CD8-positive, alpha-beta T cell (primary cell): ENCODE measurements at regions of chr2 and their contacts with region 1.

Region 1: DNA sequence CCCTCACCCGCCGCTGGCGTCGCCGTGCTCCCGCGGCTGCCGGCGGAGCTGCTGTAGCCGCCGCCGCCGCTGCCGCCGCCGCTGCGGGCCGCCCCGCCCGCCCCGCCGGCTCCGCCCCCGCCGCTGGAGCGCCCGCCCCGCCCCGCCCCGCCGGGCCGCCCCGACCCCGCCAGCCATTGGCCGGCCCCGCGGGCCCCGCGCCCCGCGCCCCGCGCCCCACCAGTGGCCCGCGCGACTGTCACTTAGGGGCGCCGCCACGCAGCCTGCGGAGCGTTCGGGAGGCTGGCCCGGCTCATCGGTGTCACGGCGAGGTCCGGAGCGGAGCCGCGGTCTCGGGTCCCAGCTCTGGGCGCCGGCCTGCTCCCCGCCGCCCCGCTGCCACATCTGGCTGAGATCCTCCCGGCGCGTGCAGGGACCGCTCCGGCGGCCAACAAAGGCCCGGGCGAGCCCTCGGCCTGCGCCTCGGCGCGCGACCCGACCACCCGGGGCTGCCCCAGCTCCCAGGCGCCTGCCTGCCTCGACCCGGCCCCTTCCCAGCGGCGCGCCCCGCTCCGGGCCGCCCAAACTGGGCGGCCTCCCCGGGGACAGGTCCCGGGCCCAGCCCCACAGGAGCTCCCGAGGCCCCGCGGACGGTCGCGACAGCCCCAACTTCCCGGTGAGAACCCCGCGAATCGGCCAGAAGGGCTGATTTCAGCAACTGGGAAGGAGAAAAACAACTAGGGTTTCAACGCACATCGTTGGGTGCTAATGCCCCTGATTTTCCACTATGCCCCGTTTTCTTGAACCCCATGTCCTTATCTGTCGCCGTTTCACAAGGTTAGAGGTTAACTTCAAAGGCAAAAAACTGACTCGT is at the start of gene MGAT4A:
- DNase-seq: peak; percentile 62 to 90 (median 82)
- ATAC-seq: peak; percentile 76
- H3K4me3 ChIP-seq: peak within 1 kb of the TSS; percentile 80 to 93
- H3K4me3 Mint-ChIP-seq: peak within 1 kb of the TSS; percentile 93
- H3K27ac ChIP-seq: peak within 1 kb of the TSS; percentile 82 to 83
- H3K27ac Mint-ChIP-seq: peak within 1 kb of the TSS; percentile 97
- H3K4me1 ChIP-seq: peaks cover 49% of the 10 kb centered on the region
- H3K4me1 Mint-ChIP-seq: peaks cover 59% of the 10 kb centered on the region
- H3K27me3 ChIP-seq: no peaks in the 10 kb centered on the region
- H3K27me3 Mint-ChIP-seq: no peaks in the 10 kb centered on the region
- CTCF ChIP-seq: no peak
- total RNA-seq, gene MGAT4A: 226 to 229 TPM

Region 2: DNA sequence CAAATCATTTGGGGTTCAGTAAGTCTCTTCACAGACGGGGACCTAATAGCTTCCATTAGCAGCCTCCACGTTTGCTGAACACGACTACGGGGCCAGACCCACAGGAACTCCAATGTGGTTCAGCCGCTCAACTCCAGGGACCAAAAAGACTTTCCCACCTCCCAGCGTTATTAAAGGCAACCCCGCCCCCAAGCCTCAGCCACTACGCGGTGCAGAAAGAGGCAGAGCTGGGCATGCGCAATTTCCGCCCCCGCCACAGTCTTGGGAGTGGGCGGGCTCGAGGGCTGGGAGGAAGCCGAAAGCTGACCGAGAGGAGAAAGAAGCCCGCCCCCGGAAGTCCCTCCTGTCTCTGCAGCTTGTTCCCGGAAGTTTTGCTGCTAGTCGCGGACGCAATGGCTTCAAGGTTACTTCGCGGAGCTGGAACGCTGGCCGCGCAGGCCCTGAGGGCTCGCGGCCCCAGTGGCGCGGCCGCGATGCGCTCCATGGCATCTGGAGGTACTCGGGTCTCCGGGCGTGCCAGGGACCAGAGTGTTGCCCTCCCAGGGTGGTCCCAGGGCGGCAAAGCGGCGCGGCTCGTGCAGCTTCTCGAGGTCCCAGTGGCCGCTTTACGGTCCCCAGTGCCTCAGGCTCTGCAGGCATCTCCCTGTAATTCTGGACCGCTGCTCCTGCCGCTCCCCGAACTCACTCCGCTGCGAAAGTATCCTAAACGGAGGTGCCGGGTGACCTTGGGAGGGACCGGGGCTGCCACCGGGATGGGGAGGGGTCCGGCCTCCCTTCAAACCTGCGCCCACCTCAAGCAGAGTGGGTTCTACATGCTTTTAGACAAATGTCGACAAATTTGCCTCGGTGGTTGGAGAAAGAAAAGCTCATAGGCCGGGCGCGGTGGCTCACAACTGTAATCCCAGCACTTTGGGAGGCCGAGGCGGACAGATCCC is 1085.3 kb before region 1 on chr2 and contains the start of gene COX5B:
- CTCF ChIA-PET with region 1: no interaction called
- POLR2A ChIA-PET with region 1: no interaction called
- intact Hi-C with region 1: loop called in 1 of 2 experiments (anchors 5 kb)
- DNase-seq: peak; percentile 97 to 99 (median 99)
- ATAC-seq: peak; percentile 97
- H3K4me3 ChIP-seq: peak within 1 kb of the TSS; percentile 94 to 97
- H3K4me3 Mint-ChIP-seq: peak within 1 kb of the TSS; percentile 91
- H3K27ac ChIP-seq: peak within 1 kb of the TSS; percentile 83 to 90
- H3K27ac Mint-ChIP-seq: peak within 1 kb of the TSS; percentile 95
- H3K4me1 ChIP-seq: peaks cover 20% of the 10 kb centered on the region
- H3K4me1 Mint-ChIP-seq: peaks cover 20% of the 10 kb centered on the region
- H3K27me3 ChIP-seq: no peaks in the 10 kb centered on the region
- H3K27me3 Mint-ChIP-seq: no peaks in the 10 kb centered on the region
- CTCF ChIP-seq: no peak
- total RNA-seq, gene COX5B: 115 to 117 TPM

Region 3: GRCh38 chr2:98444436-98445176 is 286.7 kb before region 1 on chr2 and contains the start of gene INPP4A:
- CTCF ChIA-PET with region 1: no interaction called
- POLR2A ChIA-PET with region 1: no interaction called
- intact Hi-C with region 1: loop called in 1 of 2 experiments (anchors 5 kb)
- DNase-seq: peak; percentile 61 to 91 (median 76)
- ATAC-seq: peak; percentile 67
- H3K4me3 ChIP-seq: peak within 1 kb of the TSS; percentile 77 to 89
- H3K4me3 Mint-ChIP-seq: peak within 1 kb of the TSS; percentile 98
- H3K27ac ChIP-seq: peak within 1 kb of the TSS; percentile 70 to 81
- H3K27ac Mint-ChIP-seq: peak within 1 kb of the TSS; percentile 98
- H3K4me1 ChIP-seq: peaks cover 33% of the 10 kb centered on the region
- H3K4me1 Mint-ChIP-seq: peaks cover 42% of the 10 kb centered on the region
- H3K27me3 ChIP-seq: no peaks in the 10 kb centered on the region
- H3K27me3 Mint-ChIP-seq: no peaks in the 10 kb centered on the region
- CTCF ChIP-seq: no peak
- total RNA-seq, gene INPP4A: 60.3 to 67.5 TPM

Region 4: GRCh38 chr2:98654699-98655495 is 76.4 kb before region 1 on chr2:
- CTCF ChIA-PET with region 1: interaction called, 17 read pairs
- POLR2A ChIA-PET with region 1: interaction called, 28 read pairs
- intact Hi-C with region 1: loop called (anchors 2 kb)
- DNase-seq: peak in 5 of 9 experiments; percentile 43 to 90 (median 75)
- ATAC-seq: peak; percentile 51
- H3K4me3 ChIP-seq: no peak overlapping the region
- H3K4me3 Mint-ChIP-seq: peak overlapping the region; percentile 69
- H3K27ac ChIP-seq: peak overlapping the region; percentile 77 to 80
- H3K27ac Mint-ChIP-seq: peak overlapping the region; percentile 99
- H3K4me1 ChIP-seq: peaks cover 92% of the 10 kb centered on the region
- H3K4me1 Mint-ChIP-seq: peaks cover 84% of the 10 kb centered on the region
- H3K27me3 ChIP-seq: no peaks in the 10 kb centered on the region
- H3K27me3 Mint-ChIP-seq: no peaks in the 10 kb centered on the region
- CTCF ChIP-seq: no peak

Region 5: GRCh38 chr2:98685930-98686887 is 45.1 kb before region 1 on chr2:
- CTCF ChIA-PET with region 1: interaction called, 3 read pairs
- POLR2A ChIA-PET with region 1: interaction called, 4 read pairs
- intact Hi-C with region 1: loop called in 1 of 2 experiments (anchors 2 kb)
- DNase-seq: no peak
- ATAC-seq: no peak
- H3K4me3 ChIP-seq: no peak overlapping the region
- H3K4me3 Mint-ChIP-seq: no peak overlapping the region
- H3K27ac ChIP-seq: no peak overlapping the region
- H3K27ac Mint-ChIP-seq: peak overlapping the region; percentile 94
- H3K4me1 ChIP-seq: peaks cover 75% of the 10 kb centered on the region
- H3K4me1 Mint-ChIP-seq: peaks cover 87% of the 10 kb centered on the region
- H3K27me3 ChIP-seq: no peaks in the 10 kb centered on the region
- H3K27me3 Mint-ChIP-seq: no peaks in the 10 kb centered on the region
- CTCF ChIP-seq: no peak

Region 6: GRCh38 chr2:98720286-98720685 is 11.0 kb before region 1 on chr2:
- CTCF ChIA-PET with region 1: interaction called, 3 read pairs
- POLR2A ChIA-PET with region 1: interaction called, 17 read pairs
- intact Hi-C with region 1: loop called in 1 of 2 experiments (anchors 1 kb)
- DNase-seq: no peak
- ATAC-seq: no peak
- H3K4me3 ChIP-seq: no peak overlapping the region
- H3K4me3 Mint-ChIP-seq: peak overlapping the region; percentile 11
- H3K27ac ChIP-seq: no peak overlapping the region
- H3K27ac Mint-ChIP-seq: peak overlapping the region; percentile 78
- H3K4me1 ChIP-seq: peaks cover 74% of the 10 kb centered on the region
- H3K4me1 Mint-ChIP-seq: peaks cover 84% of the 10 kb centered on the region
- H3K27me3 ChIP-seq: no peaks in the 10 kb centered on the region
- H3K27me3 Mint-ChIP-seq: no peaks in the 10 kb centered on the region
- CTCF ChIP-seq: no peak

Region 7: DNA sequence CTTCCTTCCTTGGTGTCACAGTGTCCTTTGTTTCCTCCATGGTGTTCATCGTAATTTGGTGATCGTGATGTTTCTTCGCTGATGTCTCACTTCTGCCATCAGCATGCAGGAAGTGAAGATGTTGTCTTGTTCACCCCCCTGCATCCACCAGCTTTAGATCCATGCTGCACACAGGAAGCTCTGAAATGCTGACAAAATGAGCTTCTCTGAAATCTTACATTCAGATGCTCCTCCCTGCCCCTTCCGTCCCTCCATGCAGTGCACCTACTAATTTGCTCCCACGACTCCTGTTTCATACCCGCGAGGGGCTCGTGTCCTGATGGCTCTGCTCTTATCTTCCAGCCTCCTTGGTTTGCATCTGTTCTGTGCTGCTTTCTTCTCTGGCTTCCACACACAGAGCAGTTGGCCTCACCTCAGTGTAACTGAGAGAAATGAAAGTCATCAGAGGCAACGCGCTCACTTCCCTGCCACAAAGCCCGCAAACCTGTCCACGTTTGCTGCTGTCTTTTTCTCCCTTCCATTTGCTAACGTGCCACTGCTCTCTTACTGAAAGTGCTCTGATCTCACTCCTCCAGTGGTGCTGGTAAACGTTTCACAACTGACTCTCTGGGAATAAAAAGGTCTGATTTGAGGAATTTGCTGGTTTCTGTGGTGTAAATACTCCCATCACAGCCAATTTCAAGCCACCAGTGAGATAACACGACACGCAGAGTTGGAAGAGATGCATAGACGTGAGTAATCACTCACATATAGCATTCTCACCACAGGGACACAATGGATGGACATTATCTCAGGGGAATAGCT is 40.7 kb after region 1 on chr2:
- CTCF ChIA-PET with region 1: interaction called, 17 read pairs
- POLR2A ChIA-PET with region 1: interaction called, 112 read pairs
- intact Hi-C with region 1: loop called (anchors 1 kb)
- DNase-seq: peak; percentile 36 to 93 (median 68)
- ATAC-seq: peak; percentile 68
- H3K4me3 ChIP-seq: peak overlapping the region; percentile 39 to 50
- H3K4me3 Mint-ChIP-seq: peak overlapping the region; percentile 87
- H3K27ac ChIP-seq: peak overlapping the region; percentile 79 to 89
- H3K27ac Mint-ChIP-seq: peak overlapping the region; percentile 98
- H3K4me1 ChIP-seq: peaks cover 67% of the 10 kb centered on the region
- H3K4me1 Mint-ChIP-seq: peaks cover 77% of the 10 kb centered on the region
- H3K27me3 ChIP-seq: no peaks in the 10 kb centered on the region
- H3K27me3 Mint-ChIP-seq: no peaks in the 10 kb centered on the region
- CTCF ChIP-seq: no peak

Region 8: DNA sequence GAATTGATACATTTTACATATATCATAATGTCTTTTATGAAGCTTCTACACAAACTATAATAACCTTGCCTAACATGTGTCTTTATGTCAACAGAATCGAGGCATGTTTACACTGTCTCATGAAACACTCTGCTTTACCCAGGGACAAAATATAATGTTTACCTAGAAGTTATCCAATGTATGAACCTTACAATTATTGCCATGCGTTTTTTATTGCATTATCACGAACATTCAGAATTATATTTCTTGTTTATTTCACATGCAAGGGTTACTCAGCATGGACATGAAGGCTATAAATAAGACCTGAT is 1571.3 kb after region 1 on chr2:
- CTCF ChIA-PET with region 1: no interaction called
- POLR2A ChIA-PET with region 1: no interaction called
- intact Hi-C with region 1: no loop called
- DNase-seq: no peak
- ATAC-seq: no peak
- H3K4me3 ChIP-seq: no peak overlapping the region
- H3K4me3 Mint-ChIP-seq: no peak overlapping the region
- H3K27ac ChIP-seq: no peak overlapping the region
- H3K27ac Mint-ChIP-seq: no peak overlapping the region
- H3K4me1 ChIP-seq: no peaks in the 10 kb centered on the region
- H3K4me1 Mint-ChIP-seq: no peaks in the 10 kb centered on the region
- H3K27me3 ChIP-seq: no peaks in the 10 kb centered on the region
- H3K27me3 Mint-ChIP-seq: peaks cover 12% of the 10 kb centered on the region
- CTCF ChIP-seq: no peak